Activated CD4-positive, alpha-beta T cell treated with anti-CD3 and anti-CD28 coated beads for 36 hours (primary cell): ENCODE measurements at regions of chr12 and their contacts with region 1.

Region 1: GRCh38 chr12:104215638-104216297 is at the start of gene TXNRD1:
- DNase-seq: peak; percentile 92
- ATAC-seq: peak; percentile 79
- H3K4me3 Mint-ChIP-seq: peak within 1 kb of the TSS; percentile 71
- H3K27ac Mint-ChIP-seq: peak within 1 kb of the TSS; percentile 80
- H3K4me1 Mint-ChIP-seq: peaks cover 45% of the 10 kb centered on the region
- H3K27me3 Mint-ChIP-seq: peaks cover 2% of the 10 kb centered on the region
- total RNA-seq, gene TXNRD1: 66.7 to 88.0 TPM

Region 2: GRCh38 chr12:104042580-104042979 is 173.2 kb before region 1 on chr12:
- CTCF ChIA-PET with region 1: no interaction called
- POLR2A ChIA-PET with region 1: no interaction called
- intact Hi-C with region 1: no loop called
- DNase-seq: no peak
- ATAC-seq: no peak
- H3K4me3 Mint-ChIP-seq: no peak overlapping the region
- H3K27ac Mint-ChIP-seq: no peak overlapping the region
- H3K4me1 Mint-ChIP-seq: no peaks in the 10 kb centered on the region
- H3K27me3 Mint-ChIP-seq: no peaks in the 10 kb centered on the region

Region 3: DNA sequence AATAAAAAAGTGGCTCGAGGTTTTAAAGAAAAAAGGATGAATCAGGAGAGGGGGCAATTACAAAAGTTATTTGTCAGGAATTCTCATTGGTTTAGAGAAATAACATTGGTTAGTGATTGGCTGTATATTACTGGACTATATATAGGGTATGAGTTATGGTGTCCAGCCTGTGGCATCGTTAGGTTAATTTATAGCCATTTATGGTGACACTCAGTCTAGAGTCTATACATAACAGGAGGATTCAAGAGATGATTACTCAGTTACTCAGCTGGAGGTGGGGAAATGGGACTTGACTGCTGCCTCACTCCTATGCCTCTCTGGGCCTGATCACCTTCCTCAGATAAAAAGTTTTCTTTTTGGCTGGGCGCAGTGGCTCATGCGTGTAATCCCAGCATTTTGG is 52.1 kb before region 1 on chr12:
- CTCF ChIA-PET with region 1: no interaction called
- POLR2A ChIA-PET with region 1: no interaction called
- intact Hi-C with region 1: loop called in 1 of 2 experiments (anchors 5 kb)
- DNase-seq: no peak
- ATAC-seq: peak; percentile 23
- H3K4me3 Mint-ChIP-seq: no peak overlapping the region
- H3K27ac Mint-ChIP-seq: no peak overlapping the region
- H3K4me1 Mint-ChIP-seq: peaks cover 2% of the 10 kb centered on the region
- H3K27me3 Mint-ChIP-seq: no peaks in the 10 kb centered on the region

Region 4: GRCh38 chr12:104303538-104304151 is 87.9 kb after region 1 on chr12 and contains the start of gene EID3:
- CTCF ChIA-PET with region 1: interaction called, 5 read pairs
- POLR2A ChIA-PET with region 1: no interaction called
- intact Hi-C with region 1: loop called (anchors 1 to 2 kb)
- DNase-seq: peak; percentile 95
- ATAC-seq: peak; percentile 97
- H3K4me3 Mint-ChIP-seq: peak within 1 kb of the TSS; percentile 81
- H3K27ac Mint-ChIP-seq: peak within 1 kb of the TSS; percentile 96
- H3K4me1 Mint-ChIP-seq: peaks cover 57% of the 10 kb centered on the region
- H3K27me3 Mint-ChIP-seq: no peaks in the 10 kb centered on the region
- total RNA-seq, gene EID3: 3.9 to 4.6 TPM

Region 5: DNA sequence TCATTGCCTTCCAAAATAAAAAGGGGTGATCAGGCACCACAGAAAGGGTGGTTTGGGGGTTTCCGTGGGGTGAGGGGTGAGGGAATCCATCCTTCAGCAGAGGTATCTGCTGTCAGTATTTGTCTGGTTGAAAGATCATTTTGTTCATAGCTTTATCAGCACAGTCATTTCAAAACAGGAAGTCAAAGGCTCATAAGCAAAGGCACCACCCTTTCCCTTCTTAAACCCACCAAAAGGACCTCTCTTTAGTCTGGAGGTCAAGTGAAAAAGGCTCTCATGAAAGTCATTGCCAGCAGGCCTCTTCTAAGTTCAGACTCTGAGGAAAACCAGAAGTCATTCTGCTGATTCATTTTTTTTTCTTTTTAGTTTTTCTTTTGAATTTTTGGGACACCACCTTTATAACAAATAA is 247.2 kb after region 1 on chr12:
- CTCF ChIA-PET with region 1: no interaction called
- POLR2A ChIA-PET with region 1: no interaction called
- intact Hi-C with region 1: loop called in 1 of 2 experiments (anchors 2 kb)
- DNase-seq: peak; percentile 59
- ATAC-seq: peak; percentile 54
- H3K4me3 Mint-ChIP-seq: peak overlapping the region; percentile 56
- H3K27ac Mint-ChIP-seq: peak overlapping the region; percentile 97
- H3K4me1 Mint-ChIP-seq: peaks cover 80% of the 10 kb centered on the region
- H3K27me3 Mint-ChIP-seq: no peaks in the 10 kb centered on the region

Region 6: GRCh38 chr12:104877123-104877705 is 661.4 kb after region 1 on chr12:
- CTCF ChIA-PET with region 1: no interaction called
- POLR2A ChIA-PET with region 1: no interaction called
- intact Hi-C with region 1: loop called in 1 of 2 experiments (anchors 5 kb)
- DNase-seq: peak; percentile 46
- ATAC-seq: peak; percentile 66
- H3K4me3 Mint-ChIP-seq: no peak overlapping the region
- H3K27ac Mint-ChIP-seq: no peak overlapping the region
- H3K4me1 Mint-ChIP-seq: no peaks in the 10 kb centered on the region
- H3K27me3 Mint-ChIP-seq: no peaks in the 10 kb centered on the region